A549 (cell line): ENCODE measurements at regions of chr12 and their contacts with region 1.

Region 1: GRCh38 chr12:121550974-121551634 is 29.7 kb downstream of the KDM2B start:
- DNase-seq: no peak
- ATAC-seq: no peak
- H3K4me3 ChIP-seq: no peak overlapping the region
- H3K27ac ChIP-seq: no peak overlapping the region
- H3K4me1 ChIP-seq: no peaks in the 10 kb centered on the region
- CTCF ChIP-seq: no peak
- EP300 ChIP-seq: no peak
- POLR2A ChIP-seq: no peak
- RAD21 ChIP-seq: no peak

Region 2: DNA sequence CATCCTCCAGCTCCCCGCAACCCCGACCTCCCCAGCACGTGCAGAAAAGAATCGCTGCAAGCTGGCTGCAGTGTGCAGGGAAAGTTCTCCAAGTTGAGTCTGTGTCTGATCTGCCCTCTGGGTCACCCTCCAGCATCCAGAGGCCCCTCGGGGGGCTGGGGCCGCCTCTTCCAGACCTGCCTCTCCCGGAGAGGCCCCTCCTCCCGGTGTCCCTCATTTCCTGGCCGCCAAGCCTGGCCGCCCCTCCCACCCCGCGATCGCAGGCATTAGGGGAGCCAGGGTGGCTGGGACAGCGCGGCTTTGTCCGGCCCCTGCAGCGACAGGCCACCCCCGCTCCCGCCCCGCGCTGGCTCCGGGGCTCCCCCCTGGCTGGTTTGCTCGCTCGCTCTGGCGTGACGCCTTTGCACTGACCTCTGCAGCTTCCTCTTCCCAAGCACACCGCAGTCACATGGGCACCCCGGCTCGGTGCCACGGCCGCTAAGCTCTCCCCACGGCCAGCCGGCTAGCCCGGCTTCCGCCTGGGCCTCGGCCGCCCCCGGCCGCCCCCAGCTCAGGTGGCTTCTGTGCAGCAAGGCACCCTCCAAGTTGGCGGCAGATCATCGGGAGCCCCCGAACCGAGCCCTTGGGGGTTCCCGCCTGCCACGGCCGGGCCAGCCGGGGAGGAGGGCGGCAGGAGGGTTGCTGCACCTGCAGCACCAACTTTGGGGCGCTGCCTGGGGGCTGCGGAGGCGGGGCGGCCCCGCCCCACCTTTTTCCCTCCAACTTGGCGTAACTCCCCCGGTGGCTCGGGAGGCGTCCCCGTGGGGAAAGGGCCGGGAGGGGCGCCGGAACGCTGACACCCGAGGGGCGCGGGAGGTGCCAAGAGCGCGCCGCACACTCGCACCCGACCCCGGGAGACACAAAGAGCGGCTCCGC is 13.9 kb before region 1 on chr12:
- CTCF ChIA-PET with region 1: interaction called, 22 read pairs
- POLR2A ChIA-PET with region 1: no interaction called
- DNase-seq: peak; percentile 76 to 79
- ATAC-seq: peak; percentile 79 to 80
- H3K4me3 ChIP-seq: peak overlapping the region; percentile 66
- H3K27ac ChIP-seq: peak overlapping the region; percentile 82 to 89
- H3K4me1 ChIP-seq: peaks cover 28% of the 10 kb centered on the region
- CTCF ChIP-seq: no peak
- EP300 ChIP-seq: no peak
- POLR2A ChIP-seq: peak; percentile 64; the same call in 1 of the 2 replicates
- RAD21 ChIP-seq: no peak

Region 3: DNA sequence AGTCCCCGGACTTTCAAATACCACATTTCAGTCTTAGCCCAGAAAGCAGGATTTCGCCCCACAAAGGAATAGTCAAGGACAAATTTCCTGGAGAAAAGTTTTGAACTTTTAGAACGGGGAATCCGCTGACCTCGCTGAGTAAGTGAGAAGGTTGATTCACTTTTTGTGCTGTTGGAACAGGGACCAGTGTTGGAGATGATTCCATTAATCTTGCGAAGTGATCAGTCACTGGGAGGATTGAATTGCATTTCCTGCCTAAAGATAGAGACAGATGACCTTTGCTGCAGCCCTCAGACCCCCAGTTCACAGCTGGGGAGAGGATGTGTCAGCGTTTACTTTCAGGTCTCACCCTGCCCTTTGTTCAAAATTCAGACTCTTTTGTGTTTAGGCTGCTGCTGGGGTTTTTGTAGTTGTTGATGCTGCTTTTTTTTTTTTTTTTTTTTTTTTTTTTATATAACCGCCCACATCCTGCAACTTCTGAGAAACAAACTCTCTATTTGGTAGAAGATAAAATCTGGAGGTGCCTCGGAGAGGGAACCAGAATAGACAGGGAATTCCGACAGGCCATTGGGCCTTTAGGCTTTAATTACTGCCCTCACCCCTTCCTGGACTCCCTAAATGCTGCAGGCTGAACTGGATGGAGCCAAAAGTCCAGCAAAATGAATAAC is 39.5 kb after region 1 on chr12:
- CTCF ChIA-PET with region 1: interaction called, 18 read pairs
- POLR2A ChIA-PET with region 1: no interaction called
- DNase-seq: no peak
- ATAC-seq: peak; percentile 30 to 40; a peak in 3 of 6 replicates
- H3K4me3 ChIP-seq: no peak overlapping the region; the same call in 2 of the 3 replicates
- H3K27ac ChIP-seq: peak overlapping the region; percentile 38 to 85; a peak in 4 of 6 replicates
- H3K4me1 ChIP-seq: peaks cover 5% of the 10 kb centered on the region; the same call in 1 of the 3 replicates
- CTCF ChIP-seq: no peak
- EP300 ChIP-seq: no peak
- POLR2A ChIP-seq: no peak
- RAD21 ChIP-seq: no peak

Region 4: GRCh38 chr12:121626087-121626852 is 75.2 kb after region 1 on chr12 and contains the start of gene ORAI1:
- CTCF ChIA-PET with region 1: interaction called, 190 read pairs
- POLR2A ChIA-PET with region 1: interaction called, 21 read pairs
- DNase-seq: peak; percentile 80 to 96
- ATAC-seq: peak; percentile 80 to 87
- H3K4me3 ChIP-seq: peak within 1 kb of the TSS; percentile 67
- H3K27ac ChIP-seq: peak within 1 kb of the TSS; percentile 77 to 92
- H3K4me1 ChIP-seq: peaks cover 32% of the 10 kb centered on the region
- CTCF ChIP-seq: peak; percentile 22; the same call in 2 of the 3 replicates
- EP300 ChIP-seq: no peak
- POLR2A ChIP-seq: peak; percentile 85
- RAD21 ChIP-seq: 0 out of 5 replicates have a peak, but pooled peaks of 1 of the 2 experiments have one; percentile 7
- polyA plus RNA-seq, gene ORAI1: 22.1 and 26.6 TPM in 2 replicates

Region 5: GRCh38 chr12:121668750-121669520 is 117.8 kb after region 1 on chr12:
- CTCF ChIA-PET with region 1: interaction called, 86 read pairs
- POLR2A ChIA-PET with region 1: interaction called, 3 read pairs
- DNase-seq: peak; percentile 51 to 57
- ATAC-seq: peak; percentile 41 to 57; a peak in 3 of 6 replicates
- H3K4me3 ChIP-seq: no peak overlapping the region
- H3K27ac ChIP-seq: no peak overlapping the region
- H3K4me1 ChIP-seq: peaks cover 12% of the 10 kb centered on the region
- CTCF ChIP-seq: peak; percentile 57
- EP300 ChIP-seq: no peak
- POLR2A ChIP-seq: no peak
- RAD21 ChIP-seq: peak; percentile 61 to 70

Region 6: DNA sequence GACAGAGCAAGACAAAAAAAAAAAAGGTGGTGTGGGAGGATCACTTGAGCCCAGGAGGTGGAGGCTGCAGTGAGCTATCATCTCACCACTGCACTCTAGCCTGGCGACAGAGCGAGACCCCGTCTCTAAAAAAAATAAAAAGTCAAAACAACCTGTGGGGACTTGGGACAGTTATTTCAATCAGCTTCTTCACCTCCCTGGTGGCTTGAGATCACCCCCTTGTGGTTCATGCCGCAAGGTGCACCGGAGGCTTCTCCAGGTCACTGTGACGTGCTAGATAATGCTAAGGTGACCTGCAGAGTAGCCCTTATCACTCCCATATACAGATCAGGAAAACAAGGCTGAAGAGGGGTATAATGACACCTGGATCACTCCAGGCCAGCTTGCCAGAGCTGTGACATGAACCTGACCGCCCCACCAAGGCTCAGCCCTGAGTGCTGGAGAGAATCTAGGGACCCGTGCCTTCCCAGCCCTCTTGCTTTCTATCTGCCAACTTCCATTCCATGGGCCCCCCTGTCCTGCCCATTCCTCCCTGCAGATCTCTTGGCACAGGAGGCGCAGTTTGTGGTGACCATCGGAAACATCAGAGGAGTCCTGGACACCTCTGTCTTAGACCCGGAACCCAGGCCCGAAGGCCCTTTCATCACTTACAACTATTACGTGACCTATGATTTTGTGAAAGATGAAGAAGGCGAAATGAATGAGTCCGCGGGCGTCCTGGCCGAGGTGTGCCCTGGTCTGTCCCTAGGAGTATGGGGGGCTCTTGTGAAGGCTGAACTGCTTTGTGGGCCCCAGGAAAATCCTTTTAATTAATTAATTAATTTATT is 640.0 kb after region 1 on chr12:
- CTCF ChIA-PET with region 1: no interaction called
- POLR2A ChIA-PET with region 1: no interaction called
- DNase-seq: peak; percentile 79 to 93
- ATAC-seq: peak; percentile 95
- H3K4me3 ChIP-seq: no peak overlapping the region
- H3K27ac ChIP-seq: no peak overlapping the region
- H3K4me1 ChIP-seq: no peaks in the 10 kb centered on the region
- CTCF ChIP-seq: peak; percentile 71
- EP300 ChIP-seq: no peak
- POLR2A ChIP-seq: no peak
- RAD21 ChIP-seq: peak; percentile 80 to 92